ENCODE measurements at regions of chr16 and their contacts with region 1.

Region 1: GRCh38 chr16:67279296-67280089 is at the start of gene PLEKHG4:
- DNase-seq: peak; percentile 77
- H3K4me3 Mint-ChIP-seq: peak within 1 kb of the TSS; percentile 84
- H3K27ac Mint-ChIP-seq: peak within 1 kb of the TSS; percentile 86
- H3K4me1 Mint-ChIP-seq: peaks cover 24% of the 10 kb centered on the region
- H3K27me3 Mint-ChIP-seq: no peaks in the 10 kb centered on the region
- total RNA-seq, gene PLEKHG4: 30.4 and 33.4 TPM in 2 replicates

Region 2: GRCh38 chr16:67304006-67304405 is 24.5 kb after region 1 on chr16:
- intact Hi-C with region 1: no loop called
- DNase-seq: no peak
- H3K4me3 Mint-ChIP-seq: no peak overlapping the region
- H3K27ac Mint-ChIP-seq: no peak overlapping the region
- H3K4me1 Mint-ChIP-seq: peaks cover 6% of the 10 kb centered on the region
- H3K27me3 Mint-ChIP-seq: no peaks in the 10 kb centered on the region

Region 3: GRCh38 chr16:67339453-67339852 is 60.0 kb after region 1 on chr16:
- intact Hi-C with region 1: loop called (anchors 2 kb)
- DNase-seq: no peak
- H3K4me3 Mint-ChIP-seq: no peak overlapping the region
- H3K27ac Mint-ChIP-seq: no peak overlapping the region
- H3K4me1 Mint-ChIP-seq: no peaks in the 10 kb centered on the region
- H3K27me3 Mint-ChIP-seq: peaks cover 4% of the 10 kb centered on the region

Measured in activated T-helper 2 cell treated with anti-CD3 and anti-CD28 coated beads, Interferon-gamma antibody, Interleukin-2, Interleukin-4, amounts not matched to agents 10 μg/mL and 5 μg/mL and 100 μg/mL, durations not matched to agents 14 hours and 24 hours and 36 hours (primary cell).